ENCODE measurements at regions of chr1 and their contacts with region 1.

Region 1: GRCh38 chr1:247331172-247331991 is at the start of gene ZNF496:
- DNase-seq: peak; percentile 27 to 79 (median 70)
- ATAC-seq: peak; percentile 65
- H3K4me3 ChIP-seq: peak within 1 kb of the TSS; percentile 71 to 74
- H3K4me3 Mint-ChIP-seq: peak within 1 kb of the TSS; percentile 94
- H3K27ac ChIP-seq: peak within 1 kb of the TSS; percentile 55 to 63
- H3K27ac Mint-ChIP-seq: peak within 1 kb of the TSS; percentile 94
- H3K4me1 ChIP-seq: peaks cover 56% of the 10 kb centered on the region
- H3K4me1 Mint-ChIP-seq: peaks cover 77% of the 10 kb centered on the region
- H3K27me3 ChIP-seq: no peaks in the 10 kb centered on the region
- H3K27me3 Mint-ChIP-seq: no peaks in the 10 kb centered on the region
- CTCF ChIP-seq: no peak
- total RNA-seq, gene ZNF496: 43.4 to 47.2 TPM

Region 2: DNA sequence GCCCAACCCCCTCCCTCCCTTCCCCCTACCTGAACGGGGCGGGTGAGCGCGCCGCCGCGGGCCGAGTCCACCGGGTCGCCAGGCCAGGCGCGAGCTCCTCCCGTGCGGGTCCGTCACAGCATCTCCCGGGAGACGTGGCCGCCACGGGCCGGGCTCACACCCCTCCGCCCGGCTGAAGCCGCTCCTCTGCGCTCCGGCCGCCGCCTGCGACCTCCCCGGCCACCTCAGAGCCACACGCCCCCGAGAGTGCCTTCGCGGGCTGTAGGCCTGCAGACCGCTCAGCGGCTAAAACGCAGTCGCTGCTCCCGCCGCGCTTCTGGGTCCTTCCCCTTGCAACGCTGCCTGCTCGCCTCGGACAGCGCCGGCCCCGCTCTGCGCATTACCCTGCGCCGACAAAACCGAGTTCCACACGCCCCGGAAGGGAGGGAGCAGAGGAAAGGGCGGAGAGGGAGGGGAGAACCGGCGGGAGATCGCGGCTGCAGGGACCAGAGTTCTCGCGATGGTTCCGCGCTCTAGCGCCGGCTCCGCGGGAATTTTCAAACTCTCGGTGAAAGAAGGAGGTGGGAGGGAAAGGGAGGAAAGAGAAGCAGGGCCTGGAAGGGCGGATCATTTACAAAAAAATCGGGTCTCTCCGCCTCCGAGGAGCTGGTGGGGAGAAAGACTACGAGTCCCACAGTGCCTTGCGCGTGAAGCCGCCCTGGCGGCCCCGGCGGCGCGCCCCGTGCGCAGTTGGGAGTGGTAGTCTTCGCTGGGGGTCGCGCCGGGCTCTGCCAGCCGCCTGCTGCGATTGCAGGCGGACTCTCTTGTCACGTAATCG is 399.6 kb before region 1 on chr1 and contains the start of gene AHCTF1:
- CTCF ChIA-PET with region 1: no interaction called
- POLR2A ChIA-PET with region 1: no interaction called
- intact Hi-C with region 1: loop called (anchors 2 to 5 kb)
- DNase-seq: peak; percentile 88 to 97 (median 94)
- ATAC-seq: peak; percentile 89
- H3K4me3 ChIP-seq: peak within 1 kb of the TSS; percentile 84 to 90
- H3K4me3 Mint-ChIP-seq: peak within 1 kb of the TSS; percentile 96
- H3K27ac ChIP-seq: peak within 1 kb of the TSS; percentile 78 to 94
- H3K27ac Mint-ChIP-seq: peak within 1 kb of the TSS; percentile 95
- H3K4me1 ChIP-seq: peaks cover 14% of the 10 kb centered on the region
- H3K4me1 Mint-ChIP-seq: peaks cover 33% of the 10 kb centered on the region
- H3K27me3 ChIP-seq: no peaks in the 10 kb centered on the region
- H3K27me3 Mint-ChIP-seq: no peaks in the 10 kb centered on the region
- CTCF ChIP-seq: no peak
- total RNA-seq, gene AHCTF1: 68.4 to 69.3 TPM

Region 3: GRCh38 chr1:247078261-247079140 is 252.9 kb before region 1 on chr1 and contains the start of gene ZNF670:
- CTCF ChIA-PET with region 1: no interaction called
- POLR2A ChIA-PET with region 1: no interaction called
- intact Hi-C with region 1: loop called in 1 of 2 experiments (anchors 5 kb)
- DNase-seq: peak; percentile 57 to 91 (median 82)
- ATAC-seq: peak; percentile 99
- H3K4me3 ChIP-seq: peak within 1 kb of the TSS; percentile 80 to 95
- H3K4me3 Mint-ChIP-seq: peak within 1 kb of the TSS; percentile 89
- H3K27ac ChIP-seq: peak within 1 kb of the TSS; percentile 37 to 51
- H3K27ac Mint-ChIP-seq: peak within 1 kb of the TSS; percentile 78
- H3K4me1 ChIP-seq: peaks cover 7% of the 10 kb centered on the region
- H3K4me1 Mint-ChIP-seq: peaks cover 34% of the 10 kb centered on the region
- H3K27me3 ChIP-seq: no peaks in the 10 kb centered on the region
- H3K27me3 Mint-ChIP-seq: no peaks in the 10 kb centered on the region
- CTCF ChIP-seq: no peak
- total RNA-seq, gene ZNF670: 0.17 TPM in 1 of 2 experiments, not detected in the other

Region 4: GRCh38 chr1:247103859-247104591 is 227.4 kb before region 1 on chr1 and contains the start of gene ZNF669:
- CTCF ChIA-PET with region 1: no interaction called
- POLR2A ChIA-PET with region 1: no interaction called
- intact Hi-C with region 1: loop called in 1 of 2 experiments (anchors 10 kb)
- DNase-seq: peak; percentile 83 to 94 (median 91)
- ATAC-seq: peak; percentile 98
- H3K4me3 ChIP-seq: peak within 1 kb of the TSS; percentile 74 to 96
- H3K4me3 Mint-ChIP-seq: peak within 1 kb of the TSS; percentile 89
- H3K27ac ChIP-seq: peak within 1 kb of the TSS; percentile 62 to 85
- H3K27ac Mint-ChIP-seq: peak within 1 kb of the TSS; percentile 85
- H3K4me1 ChIP-seq: peaks cover 9% of the 10 kb centered on the region
- H3K4me1 Mint-ChIP-seq: peaks cover 21% of the 10 kb centered on the region
- H3K27me3 ChIP-seq: no peaks in the 10 kb centered on the region
- H3K27me3 Mint-ChIP-seq: peaks cover 20% of the 10 kb centered on the region
- CTCF ChIP-seq: no peak
- total RNA-seq, gene ZNF669: 15.5 to 23.2 TPM

Region 5: DNA sequence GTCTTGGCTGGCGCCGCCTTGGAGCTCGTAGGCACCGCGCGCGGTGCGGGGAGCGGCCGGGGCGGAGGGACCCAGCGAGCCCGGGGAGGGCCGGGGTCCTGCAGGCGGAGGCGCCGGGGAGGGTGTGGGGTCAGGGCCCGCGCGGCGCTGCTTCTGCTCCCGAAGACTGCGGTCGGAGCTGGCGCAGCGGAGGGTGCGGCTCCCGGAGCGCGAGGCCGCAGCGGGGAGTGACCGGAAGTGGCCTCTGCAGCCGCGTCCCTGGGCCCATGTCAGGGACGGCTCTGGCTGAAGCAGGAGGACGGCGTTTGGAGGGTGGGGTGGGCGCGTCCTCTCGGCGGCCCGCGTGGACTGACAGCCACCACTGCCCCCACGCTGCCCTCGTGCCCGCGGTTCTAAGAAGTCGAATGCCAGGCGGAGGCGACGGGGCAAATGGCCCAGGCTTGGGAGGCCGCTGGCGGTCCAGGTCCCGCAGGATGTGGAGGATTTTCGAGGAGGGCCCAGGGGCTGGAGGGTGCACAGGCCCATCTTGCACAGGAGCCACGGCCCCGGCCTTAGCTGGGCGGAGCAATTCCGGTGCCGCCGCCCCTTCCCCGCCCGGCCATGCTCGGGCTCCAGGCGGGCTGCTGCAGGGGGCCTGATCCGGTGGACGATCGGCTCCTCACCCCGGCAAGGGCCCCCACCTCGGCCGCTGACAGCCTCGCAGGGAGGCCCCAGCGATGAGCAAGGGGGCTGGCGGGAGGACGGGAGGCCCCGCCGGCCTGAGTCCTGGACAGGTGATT is 219.5 kb before region 1 on chr1:
- CTCF ChIA-PET with region 1: no interaction called
- POLR2A ChIA-PET with region 1: no interaction called
- intact Hi-C with region 1: loop called (anchors 5 to 10 kb)
- DNase-seq: peak in 1 of 9 experiments; percentile 15
- ATAC-seq: peak; percentile 51
- H3K4me3 ChIP-seq: peak overlapping the region; percentile 33 to 46
- H3K4me3 Mint-ChIP-seq: peak overlapping the region; percentile 49
- H3K27ac ChIP-seq: no peak overlapping the region
- H3K27ac Mint-ChIP-seq: no peak overlapping the region
- H3K4me1 ChIP-seq: peaks cover 9% of the 10 kb centered on the region
- H3K4me1 Mint-ChIP-seq: peaks cover 8% of the 10 kb centered on the region
- H3K27me3 ChIP-seq: peaks cover 6 to 18% of the 10 kb centered on the region in 2 experiments
- H3K27me3 Mint-ChIP-seq: peaks cover 42% of the 10 kb centered on the region
- CTCF ChIP-seq: no peak

Region 6: GRCh38 chr1:247172996-247173395 is 158.4 kb before region 1 on chr1:
- CTCF ChIA-PET with region 1: no interaction called
- POLR2A ChIA-PET with region 1: no interaction called
- intact Hi-C with region 1: loop called in 1 of 2 experiments (anchors 5 kb)
- DNase-seq: peak in 1 of 9 experiments; percentile 11
- ATAC-seq: no peak
- H3K4me3 ChIP-seq: no peak overlapping the region
- H3K4me3 Mint-ChIP-seq: no peak overlapping the region
- H3K27ac ChIP-seq: no peak overlapping the region
- H3K27ac Mint-ChIP-seq: no peak overlapping the region
- H3K4me1 ChIP-seq: no peaks in the 10 kb centered on the region
- H3K4me1 Mint-ChIP-seq: peaks cover 19% of the 10 kb centered on the region
- H3K27me3 ChIP-seq: no peaks in the 10 kb centered on the region
- H3K27me3 Mint-ChIP-seq: no peaks in the 10 kb centered on the region
- CTCF ChIP-seq: no peak

Region 7: DNA sequence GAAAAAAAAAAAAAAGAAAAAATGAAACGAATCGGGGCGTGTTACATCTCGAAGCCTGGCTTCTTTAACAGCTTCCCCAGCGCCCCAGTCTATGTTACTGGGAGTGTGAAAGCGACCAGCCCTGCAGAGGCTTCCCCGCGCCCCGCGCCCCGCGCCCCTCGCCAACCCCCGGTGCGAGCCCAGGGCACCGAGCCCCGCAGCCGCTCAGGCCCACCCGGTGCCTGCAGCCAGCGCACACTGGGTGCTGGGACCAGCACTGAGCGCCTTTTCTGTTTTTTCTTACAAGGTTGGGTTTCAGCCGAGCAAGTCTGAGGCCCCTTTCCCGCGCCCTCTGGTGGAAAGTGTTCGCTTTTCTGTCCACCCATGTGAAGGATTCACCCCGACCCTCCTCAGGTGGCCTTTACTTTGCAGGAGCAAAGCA is 42.3 kb after region 1 on chr1:
- CTCF ChIA-PET with region 1: interaction called, 8 read pairs
- POLR2A ChIA-PET with region 1: interaction called, 3 read pairs
- intact Hi-C with region 1: loop called in 1 of 2 experiments (anchors 5 kb)
- DNase-seq: peak; percentile 9 to 74 (median 65)
- ATAC-seq: peak; percentile 86
- H3K4me3 ChIP-seq: peak overlapping the region in 1 of 2 experiments; percentile 37
- H3K4me3 Mint-ChIP-seq: peak overlapping the region; percentile 56
- H3K27ac ChIP-seq: no peak overlapping the region
- H3K27ac Mint-ChIP-seq: no peak overlapping the region
- H3K4me1 ChIP-seq: no peaks in the 10 kb centered on the region
- H3K4me1 Mint-ChIP-seq: peaks cover 6% of the 10 kb centered on the region
- H3K27me3 ChIP-seq: no peaks in the 10 kb centered on the region
- H3K27me3 Mint-ChIP-seq: peaks cover 2% of the 10 kb centered on the region
- CTCF ChIP-seq: peak; percentile 48